ENCODE measurements at regions of chr12 and their contacts with region 1.

Region 1: DNA sequence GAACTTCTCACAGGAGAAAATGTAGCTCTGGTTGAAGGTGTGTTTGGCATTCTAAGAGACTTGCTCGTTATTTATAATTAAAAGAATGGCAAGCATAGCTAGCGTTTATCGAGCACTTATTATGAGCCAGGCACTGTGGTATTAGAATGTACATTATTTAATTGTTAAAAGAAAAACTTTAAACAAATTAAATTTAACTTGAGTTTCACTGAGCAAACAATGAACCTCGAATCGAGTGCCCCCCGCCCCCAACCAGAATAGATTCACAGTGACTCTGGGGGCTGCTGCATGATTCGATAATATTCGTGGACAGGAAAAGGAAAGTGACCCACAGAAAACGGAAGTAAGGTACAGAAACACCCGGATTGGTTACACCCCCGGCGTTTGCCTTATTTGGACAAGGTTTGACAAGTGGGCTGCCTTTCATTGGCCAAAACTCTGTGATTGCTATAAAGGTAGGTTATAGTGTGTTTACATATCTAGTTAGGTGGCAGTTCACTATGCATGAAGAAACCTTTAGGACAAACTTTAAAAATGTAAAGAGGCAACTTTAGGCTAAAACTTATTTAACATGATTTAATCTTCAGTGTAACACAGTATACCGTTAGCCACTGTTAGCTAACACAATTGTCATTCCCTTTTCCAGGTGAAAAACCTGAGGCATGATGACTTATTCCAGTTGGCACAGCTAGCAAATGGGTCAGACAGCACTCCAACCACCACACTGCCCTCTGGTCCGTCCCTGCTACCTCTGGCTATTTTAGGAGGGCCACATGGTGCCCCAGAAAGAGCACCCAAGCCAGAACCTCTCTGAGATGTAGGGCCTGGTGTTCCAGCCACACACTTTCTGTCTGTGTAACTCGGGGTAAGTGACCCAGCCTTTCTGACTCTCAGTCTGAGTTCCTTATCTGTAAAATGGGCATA is 7.1 kb downstream of the SCNN1A start:
- DNase-seq: peak; percentile 48 to 56
- ATAC-seq: peak; percentile 50 to 81
- H3K4me3 ChIP-seq: no peak overlapping the region
- H3K27ac ChIP-seq: peak overlapping the region; percentile 49 to 70 (median 64)
- H3K4me1 ChIP-seq: peaks cover 10 to 20% of the 10 kb centered on the region in 2 donors
- H3K27me3 ChIP-seq: no peaks in the 10 kb centered on the region
- CTCF ChIP-seq: no peak
- POLR2A ChIP-seq: no peak

Region 2: DNA sequence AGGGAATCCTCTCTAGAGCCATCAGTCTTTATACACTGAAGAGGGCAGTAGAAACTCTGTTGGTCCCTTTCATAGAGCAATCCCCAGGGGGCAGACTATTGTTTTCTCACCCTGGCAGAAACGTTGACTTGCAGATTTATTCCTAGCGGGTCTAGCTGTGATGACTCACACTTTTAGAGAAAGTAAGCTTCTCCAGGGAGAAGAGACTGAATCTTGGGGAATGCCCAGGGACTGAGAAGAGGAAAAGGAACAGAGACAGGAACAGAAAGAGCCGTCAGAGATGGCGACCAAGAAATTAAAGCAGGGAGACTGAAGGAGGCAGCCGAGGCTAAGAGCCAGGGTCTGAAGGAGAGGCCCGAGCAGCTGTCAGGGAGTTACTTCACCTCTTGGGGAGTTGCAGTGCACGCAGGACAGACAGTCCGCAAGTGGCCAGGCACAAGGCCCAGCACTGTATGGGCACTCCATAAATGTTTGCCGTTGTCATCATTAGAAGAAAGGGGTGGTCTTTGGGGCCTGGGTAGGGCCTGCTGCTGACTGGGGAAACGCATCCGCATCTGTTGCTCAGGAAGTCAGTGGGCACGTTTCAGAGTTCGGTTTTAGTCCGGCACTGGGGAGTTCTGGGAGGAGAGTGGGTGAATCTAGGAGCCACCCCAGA is 44.8 kb before region 1 on chr12:
- in situ Hi-C with region 1: no loop called
- intact Hi-C with region 1: loop called (anchors 2 kb)
- DNase-seq: peak; percentile 70 to 86
- ATAC-seq: peak; percentile 77 to 78
- H3K4me3 ChIP-seq: peak overlapping the region; percentile 4 to 27 (median 12)
- H3K27ac ChIP-seq: peak overlapping the region; percentile 70 to 85 (median 81)
- H3K4me1 ChIP-seq: peaks cover 57 to 58% of the 10 kb centered on the region in 2 donors
- H3K27me3 ChIP-seq: no peaks in the 10 kb centered on the region
- CTCF ChIP-seq: peak; percentile 30 to 45 (median 40)
- POLR2A ChIP-seq: no peak

Region 3: DNA sequence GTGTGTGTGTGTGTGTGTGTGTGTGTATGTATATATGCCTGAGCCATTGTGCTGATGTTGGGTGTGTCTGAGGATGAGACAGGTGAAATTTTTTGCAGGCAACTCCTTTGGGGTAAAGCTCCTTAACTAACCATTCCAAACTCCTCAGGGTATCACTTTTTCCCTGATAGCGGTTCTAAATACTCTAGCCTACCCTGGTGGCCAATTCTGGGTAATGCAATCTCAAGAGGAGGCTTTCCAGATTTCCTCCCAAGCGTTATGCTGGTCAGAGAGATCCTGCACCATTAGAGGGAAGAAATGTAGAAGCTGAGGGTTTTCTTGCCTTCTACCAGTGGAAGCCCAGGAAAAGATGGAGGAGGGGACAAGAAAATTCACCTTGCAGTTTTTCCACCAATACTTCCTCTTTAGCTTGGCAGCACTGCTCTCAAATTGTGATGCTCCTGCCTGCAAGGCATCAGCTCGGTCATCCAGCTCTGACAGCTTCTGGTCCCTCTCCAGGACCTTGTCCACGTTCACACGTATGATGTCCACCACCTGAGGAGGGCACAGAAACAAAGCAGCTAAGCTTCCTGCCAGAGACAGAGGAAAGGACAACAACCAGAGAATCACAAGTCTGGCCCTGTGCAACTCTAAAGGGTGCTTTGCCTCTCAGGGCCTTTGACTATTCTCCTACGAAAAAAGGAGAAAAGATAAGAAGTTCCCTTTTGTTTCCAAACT is 97.4 kb after region 1 on chr12:
- in situ Hi-C with region 1: no loop called
- intact Hi-C with region 1: no loop called
- DNase-seq: peak in 1 of 2 donors; percentile 26
- ATAC-seq: peak; percentile 38 to 39
- H3K4me3 ChIP-seq: no peak overlapping the region
- H3K27ac ChIP-seq: no peak overlapping the region
- H3K4me1 ChIP-seq: peaks cover 24 to 26% of the 10 kb centered on the region in 2 donors
- H3K27me3 ChIP-seq: no peaks in the 10 kb centered on the region
- CTCF ChIP-seq: peak; percentile 77 to 88 (median 80)
- POLR2A ChIP-seq: no peak

Measured in gastrocnemius medialis (tissue), 4 donors.